Heart left ventricle (tissue), 16 donors: ENCODE measurements at regions of chr7 and their contacts with region 1.

Region 1: DNA sequence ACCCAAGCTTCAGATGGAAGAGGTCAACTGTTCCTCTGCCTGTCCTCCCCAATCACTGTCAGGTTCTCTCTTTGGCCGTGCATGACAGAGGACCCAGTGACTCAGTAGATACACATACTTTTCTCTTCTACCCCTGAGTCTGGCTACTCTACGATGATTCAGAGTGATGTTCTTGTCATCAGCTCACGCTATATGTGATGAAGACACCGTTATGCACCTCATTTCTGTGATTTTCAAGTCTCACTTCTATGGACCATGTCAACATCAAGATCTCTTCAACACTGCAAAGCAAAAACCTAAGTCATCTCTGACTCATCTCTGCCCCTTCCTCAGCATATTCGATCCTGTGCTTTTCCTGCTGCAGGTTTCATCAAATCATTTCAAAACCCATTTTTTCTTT is 76.6 kb upstream of the DGKI start:
- DNase-seq: no peak
- ATAC-seq: no peak
- H3K4me3 ChIP-seq: no peak overlapping the region
- H3K27ac ChIP-seq: no peak overlapping the region
- H3K4me1 ChIP-seq: peaks cover 0 to 35% (median 10%) of the 10 kb centered on the region in 12 donors
- H3K27me3 ChIP-seq: no peaks in the 10 kb centered on the region
- CTCF ChIP-seq: no peak
- POLR2A ChIP-seq: no peak

Region 2: DNA sequence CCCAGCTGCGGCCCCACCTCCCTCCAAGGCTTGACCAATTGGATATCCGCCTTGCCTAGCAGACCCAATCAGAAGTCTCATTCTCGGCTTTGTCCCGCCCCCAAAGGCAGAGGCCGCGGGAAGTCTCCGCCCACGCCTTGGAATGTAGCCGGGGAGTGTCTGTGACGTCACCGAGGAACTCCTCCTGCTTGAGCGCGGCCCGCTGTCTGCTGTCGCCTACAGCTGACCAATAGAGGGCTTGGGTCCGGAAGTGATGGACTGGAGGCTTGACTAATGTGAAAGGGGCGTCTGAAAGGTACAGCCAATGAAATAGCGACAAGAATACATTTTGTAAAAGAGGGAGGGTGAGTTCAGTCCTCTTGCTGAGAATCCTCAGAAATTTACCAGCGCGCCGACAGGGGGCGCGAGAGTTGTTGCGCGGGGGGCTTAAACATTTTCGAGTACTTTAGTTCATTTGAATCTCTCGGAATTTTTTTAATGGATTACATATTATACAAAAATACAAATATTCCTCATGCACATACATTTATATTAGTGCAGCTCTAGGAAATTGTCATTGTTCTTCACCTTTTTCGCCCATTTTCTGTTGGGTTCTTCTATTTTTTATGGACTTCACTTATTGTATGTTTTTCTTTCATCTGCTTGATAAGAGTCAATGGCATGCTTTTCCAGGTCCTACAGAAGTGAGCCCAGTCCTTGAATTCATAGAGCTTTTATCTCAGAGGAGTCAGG is 78.9 kb after region 1 on chr7:
- intact Hi-C with region 1: loop called in 1 of 10 experiments (anchors 5 kb)
- DNase-seq: peak; percentile 99
- ATAC-seq: peak; percentile 96 to 98 (median 98)
- H3K4me3 ChIP-seq: peak overlapping the region; percentile 70 to 99 (median 81)
- H3K27ac ChIP-seq: peak overlapping the region in 11 of 12 donors; percentile 86 to 97 (median 92)
- H3K4me1 ChIP-seq: peaks cover 0 to 37% (median 31%) of the 10 kb centered on the region in 12 donors
- H3K27me3 ChIP-seq: no peaks in the 10 kb centered on the region
- CTCF ChIP-seq: peak; percentile 87 to 98 (median 93)
- POLR2A ChIP-seq: no peak

Region 3: DNA sequence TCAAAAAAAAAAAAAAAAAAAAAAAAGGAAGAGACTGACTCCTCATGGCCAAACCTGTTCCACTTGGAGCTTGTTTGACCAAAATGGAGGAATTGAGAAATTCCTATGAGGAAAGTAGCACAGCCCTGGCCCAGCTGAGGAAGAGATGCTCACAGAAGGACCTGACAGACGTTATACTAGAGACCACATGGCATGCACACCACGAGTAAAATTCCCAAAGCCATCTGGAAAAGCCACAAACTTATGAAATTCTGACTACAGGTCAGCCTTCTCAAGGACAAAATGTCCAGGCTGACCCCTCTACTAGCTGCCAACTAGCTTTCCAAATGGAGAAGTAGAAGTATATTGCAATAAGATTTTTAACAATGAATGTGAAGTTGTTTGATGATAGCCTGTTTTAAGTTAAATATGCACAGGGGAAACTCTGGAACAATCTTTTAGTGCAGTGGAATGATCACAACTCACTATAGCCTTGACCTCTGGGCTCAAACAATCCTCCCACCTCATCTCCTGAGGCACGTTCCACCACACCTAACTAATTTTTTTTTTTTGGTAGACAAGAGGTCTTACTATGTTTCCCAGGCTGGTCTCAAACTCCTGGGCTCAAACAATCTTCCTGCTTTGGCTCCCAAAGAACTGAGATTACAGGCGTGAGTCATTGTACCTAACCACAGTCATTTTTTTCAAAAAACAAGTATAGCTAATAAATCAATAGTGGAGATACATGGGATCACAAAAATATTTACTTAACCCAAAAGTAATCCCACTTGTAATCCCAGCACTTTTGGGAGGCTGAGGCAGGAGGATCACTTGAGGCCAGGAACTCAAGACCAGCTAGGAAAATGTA is 228.6 kb after region 1 on chr7:
- intact Hi-C with region 1: no loop called
- DNase-seq: no peak
- ATAC-seq: no peak
- H3K4me3 ChIP-seq: no peak overlapping the region
- H3K27ac ChIP-seq: no peak overlapping the region
- H3K4me1 ChIP-seq: no peaks in the 10 kb centered on the region
- H3K27me3 ChIP-seq: no peaks in the 10 kb centered on the region
- CTCF ChIP-seq: no peak
- POLR2A ChIP-seq: no peak

Region 4: DNA sequence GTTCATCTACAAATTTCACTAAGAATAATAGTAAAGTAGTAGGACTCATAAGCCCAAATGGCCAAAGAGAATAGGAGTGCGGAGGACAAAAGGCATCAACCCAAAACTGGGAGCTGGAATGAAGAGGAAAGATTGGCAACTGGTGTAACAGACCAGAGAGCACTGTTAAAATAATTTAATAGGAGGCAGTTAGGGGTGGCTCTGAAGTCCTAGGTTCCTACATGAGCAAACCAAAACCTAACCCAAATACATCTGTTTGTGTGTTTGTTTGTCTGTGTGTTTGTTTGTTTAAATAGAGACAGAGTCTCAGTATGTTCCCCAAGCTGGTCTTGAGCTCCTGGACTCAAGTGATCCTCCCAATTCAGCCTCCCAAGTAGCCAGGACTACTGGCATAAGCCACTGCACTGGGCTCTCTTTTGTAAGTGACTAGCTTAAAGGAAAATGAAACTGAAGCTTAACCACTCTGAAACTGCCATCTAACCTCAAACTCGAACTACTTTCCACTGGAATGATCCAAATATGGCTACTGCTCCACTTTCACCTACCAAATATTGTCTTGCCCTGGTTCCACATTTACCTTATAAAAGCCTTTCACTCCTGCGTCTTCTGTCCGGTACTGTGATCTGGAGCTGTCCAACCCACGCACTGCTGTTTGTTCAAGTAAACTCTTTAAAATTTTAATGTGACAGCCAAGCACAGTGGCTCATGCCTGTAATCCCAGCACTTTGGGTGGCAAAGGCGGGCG is 247.8 kb after region 1 on chr7:
- intact Hi-C with region 1: no loop called
- DNase-seq: no peak
- ATAC-seq: no peak
- H3K4me3 ChIP-seq: no peak overlapping the region
- H3K27ac ChIP-seq: no peak overlapping the region
- H3K4me1 ChIP-seq: no peaks in the 10 kb centered on the region
- H3K27me3 ChIP-seq: no peaks in the 10 kb centered on the region
- CTCF ChIP-seq: no peak
- POLR2A ChIP-seq: no peak